ENCODE measurements at regions of chr5 and their contacts with region 1.

Region 1: GRCh38 chr5:119411935-119412602 is 40.2 kb upstream of the HSD17B4 start:
- DNase-seq: peak; percentile 73
- ATAC-seq: peak; percentile 87
- H3K4me3 Mint-ChIP-seq: peak overlapping the region; percentile 72
- H3K27ac Mint-ChIP-seq: peak overlapping the region; percentile 0
- H3K4me1 Mint-ChIP-seq: peaks cover 24% of the 10 kb centered on the region
- H3K27me3 Mint-ChIP-seq: no peaks in the 10 kb centered on the region

Region 2: GRCh38 chr5:119022017-119022745 is 389.9 kb before region 1 on chr5:
- CTCF ChIA-PET with region 1: interaction called, 102 read pairs
- POLR2A ChIA-PET with region 1: no interaction called
- DNase-seq: no peak
- ATAC-seq: peak; percentile 68
- H3K4me3 Mint-ChIP-seq: no peak overlapping the region
- H3K27ac Mint-ChIP-seq: no peak overlapping the region
- H3K4me1 Mint-ChIP-seq: peaks cover 3% of the 10 kb centered on the region
- H3K27me3 Mint-ChIP-seq: no peaks in the 10 kb centered on the region

Region 3: GRCh38 chr5:119267958-119268386 is 144.1 kb before region 1 on chr5:
- CTCF ChIA-PET with region 1: interaction called, 46 read pairs
- POLR2A ChIA-PET with region 1: interaction called, 3 read pairs
- DNase-seq: peak; percentile 94
- ATAC-seq: peak; percentile 70
- H3K4me3 Mint-ChIP-seq: peak overlapping the region; percentile 98
- H3K27ac Mint-ChIP-seq: peak overlapping the region; percentile 96
- H3K4me1 Mint-ChIP-seq: peaks cover 56% of the 10 kb centered on the region
- H3K27me3 Mint-ChIP-seq: no peaks in the 10 kb centered on the region

Region 4: DNA sequence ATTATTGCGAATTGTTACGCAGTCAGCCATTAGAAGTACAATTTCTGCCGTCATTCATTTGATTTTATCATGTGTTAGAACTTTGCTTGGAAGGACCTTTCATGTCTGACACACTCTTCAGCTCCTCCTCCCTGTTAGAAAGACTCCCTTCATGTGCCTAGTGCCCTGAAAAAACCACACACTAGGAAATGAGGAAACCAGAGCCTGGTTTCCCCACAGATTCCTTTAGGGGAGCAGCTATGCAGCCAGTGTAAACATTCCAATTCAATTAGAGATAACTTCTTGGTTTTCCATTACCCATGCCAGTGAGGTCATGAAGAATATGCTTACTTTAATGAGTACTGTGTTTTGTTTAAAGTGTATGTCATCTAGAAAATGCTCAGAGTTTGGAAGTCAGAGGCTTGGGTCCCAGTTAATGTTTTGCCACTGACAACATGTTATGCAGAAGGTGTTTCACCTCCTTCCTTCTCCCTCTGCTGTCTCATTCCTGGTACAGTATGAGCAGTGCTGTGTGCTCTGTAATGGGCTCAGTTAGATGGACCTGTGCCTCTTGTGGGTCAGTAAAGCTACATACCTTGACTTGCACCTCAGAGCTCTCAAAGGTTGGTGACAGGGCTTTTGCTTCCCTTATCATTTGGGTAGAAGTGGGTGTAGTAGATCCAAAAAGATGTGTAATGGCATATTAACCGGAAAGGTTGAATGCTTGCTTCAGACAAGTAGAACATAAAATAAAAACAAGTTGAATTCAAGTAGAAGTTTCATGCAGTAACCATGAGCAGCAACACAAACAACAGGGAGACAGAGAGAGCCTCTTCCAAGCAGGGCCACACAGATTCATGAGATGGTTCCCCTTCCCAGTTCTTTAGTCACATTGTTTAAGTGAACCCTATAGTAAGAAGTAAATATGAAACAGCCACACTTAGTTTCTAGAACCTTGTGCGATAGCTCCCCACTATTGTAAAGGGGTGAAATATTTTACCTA is 108.9 kb before region 1 on chr5:
- CTCF ChIA-PET with region 1: interaction called, 11 read pairs
- POLR2A ChIA-PET with region 1: no interaction called
- DNase-seq: peak; percentile 19
- ATAC-seq: peak; percentile 44
- H3K4me3 Mint-ChIP-seq: no peak overlapping the region
- H3K27ac Mint-ChIP-seq: peak overlapping the region; percentile 73
- H3K4me1 Mint-ChIP-seq: peaks cover 95% of the 10 kb centered on the region
- H3K27me3 Mint-ChIP-seq: no peaks in the 10 kb centered on the region

Region 5: GRCh38 chr5:119340597-119341218 is 71.4 kb before region 1 on chr5:
- CTCF ChIA-PET with region 1: interaction called, 94 read pairs
- POLR2A ChIA-PET with region 1: interaction called, 7 read pairs
- DNase-seq: peak; percentile 89
- ATAC-seq: peak; percentile 68
- H3K4me3 Mint-ChIP-seq: peak overlapping the region; percentile 78
- H3K27ac Mint-ChIP-seq: peak overlapping the region; percentile 95
- H3K4me1 Mint-ChIP-seq: peaks cover 96% of the 10 kb centered on the region
- H3K27me3 Mint-ChIP-seq: no peaks in the 10 kb centered on the region

Region 6: GRCh38 chr5:119367502-119368237 is 44.4 kb before region 1 on chr5:
- CTCF ChIA-PET with region 1: interaction called, 29 read pairs
- POLR2A ChIA-PET with region 1: no interaction called
- DNase-seq: no peak
- ATAC-seq: peak; percentile 61
- H3K4me3 Mint-ChIP-seq: peak overlapping the region; percentile 40
- H3K27ac Mint-ChIP-seq: peak overlapping the region; percentile 88
- H3K4me1 Mint-ChIP-seq: peaks cover 83% of the 10 kb centered on the region
- H3K27me3 Mint-ChIP-seq: no peaks in the 10 kb centered on the region

Region 7: DNA sequence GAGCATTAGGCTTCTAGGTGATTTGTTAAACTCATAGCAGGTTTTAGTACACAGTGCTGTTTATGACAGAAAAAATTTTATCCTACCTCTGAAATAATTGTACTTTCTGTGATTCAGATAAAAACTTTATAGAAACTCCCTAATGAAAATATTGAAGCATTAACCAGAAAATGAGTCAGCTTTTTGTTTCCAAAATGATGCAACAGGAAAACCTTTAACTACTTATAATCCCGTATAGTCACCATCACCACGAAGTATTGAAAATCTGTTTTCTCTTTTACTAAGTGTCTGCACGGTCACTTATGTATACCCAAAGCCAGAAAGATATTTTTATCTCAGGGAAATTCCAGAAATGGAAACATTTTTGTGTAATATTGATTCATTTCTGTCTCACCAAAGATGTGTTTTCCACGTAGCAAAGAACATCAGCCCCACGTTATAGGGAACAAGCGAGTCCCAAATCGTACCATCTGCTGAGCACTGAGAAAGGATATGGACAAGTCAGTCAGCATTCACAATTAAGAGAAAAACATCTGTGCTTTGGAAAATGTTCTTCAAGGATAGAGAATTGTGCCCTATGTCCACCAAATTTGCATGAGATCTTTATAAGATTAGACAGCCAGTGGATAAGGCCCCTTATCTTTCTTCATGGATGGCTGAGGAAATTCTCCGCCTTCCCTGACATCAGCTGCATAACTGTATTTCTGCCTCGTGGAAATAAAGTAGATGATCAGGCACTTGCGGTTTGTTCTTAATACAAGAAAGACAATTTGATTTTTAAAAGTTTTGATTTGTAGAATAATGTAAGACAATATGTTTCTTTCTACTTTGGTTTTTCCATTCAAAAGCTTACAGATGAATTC is 14.3 kb before region 1 on chr5:
- CTCF ChIA-PET with region 1: interaction called, 60 read pairs
- POLR2A ChIA-PET with region 1: no interaction called
- DNase-seq: no peak
- ATAC-seq: peak; percentile 41
- H3K4me3 Mint-ChIP-seq: peak overlapping the region; percentile 19
- H3K27ac Mint-ChIP-seq: peak overlapping the region; percentile 58
- H3K4me1 Mint-ChIP-seq: peaks cover 57% of the 10 kb centered on the region
- H3K27me3 Mint-ChIP-seq: no peaks in the 10 kb centered on the region

Region 8: GRCh38 chr5:119445544-119445943 is 33.5 kb after region 1 on chr5:
- CTCF ChIA-PET with region 1: no interaction called
- POLR2A ChIA-PET with region 1: no interaction called
- DNase-seq: no peak
- ATAC-seq: no peak
- H3K4me3 Mint-ChIP-seq: no peak overlapping the region
- H3K27ac Mint-ChIP-seq: no peak overlapping the region
- H3K4me1 Mint-ChIP-seq: no peaks in the 10 kb centered on the region
- H3K27me3 Mint-ChIP-seq: peaks cover 35% of the 10 kb centered on the region

Region 9: DNA sequence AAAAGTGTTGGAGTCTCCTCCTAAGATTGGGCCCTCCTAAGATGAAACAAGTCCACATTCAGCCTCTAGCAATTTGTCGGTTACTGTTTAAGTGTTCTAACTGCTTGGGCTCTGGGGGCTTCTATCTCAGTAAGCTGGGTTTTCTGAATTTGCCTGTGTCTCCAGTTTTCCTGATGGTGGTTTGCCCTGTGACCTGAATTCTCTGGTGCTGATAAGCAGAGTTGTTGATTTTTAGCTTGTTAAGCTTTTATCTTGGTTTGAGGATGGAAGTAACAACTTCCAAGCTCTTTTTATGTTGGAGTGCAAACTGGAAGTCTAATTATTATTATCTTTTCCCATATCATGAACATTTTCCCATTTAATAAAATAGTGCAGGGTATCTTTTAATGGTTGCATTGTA is 71.1 kb after region 1 on chr5:
- CTCF ChIA-PET with region 1: no interaction called
- POLR2A ChIA-PET with region 1: no interaction called
- DNase-seq: no peak
- ATAC-seq: no peak
- H3K4me3 Mint-ChIP-seq: no peak overlapping the region
- H3K27ac Mint-ChIP-seq: no peak overlapping the region
- H3K4me1 Mint-ChIP-seq: no peaks in the 10 kb centered on the region
- H3K27me3 Mint-ChIP-seq: no peaks in the 10 kb centered on the region

Measured in activated CD8-positive, alpha-beta T cell treated with anti-CD3 and anti-CD28 coated beads, Interleukin-2, amount 10 ng/mL, durations not matched to agents 7 days and 5 days (primary cell).